ENCODE measurements at regions of chr3 and their contacts with region 1.

Region 1: DNA sequence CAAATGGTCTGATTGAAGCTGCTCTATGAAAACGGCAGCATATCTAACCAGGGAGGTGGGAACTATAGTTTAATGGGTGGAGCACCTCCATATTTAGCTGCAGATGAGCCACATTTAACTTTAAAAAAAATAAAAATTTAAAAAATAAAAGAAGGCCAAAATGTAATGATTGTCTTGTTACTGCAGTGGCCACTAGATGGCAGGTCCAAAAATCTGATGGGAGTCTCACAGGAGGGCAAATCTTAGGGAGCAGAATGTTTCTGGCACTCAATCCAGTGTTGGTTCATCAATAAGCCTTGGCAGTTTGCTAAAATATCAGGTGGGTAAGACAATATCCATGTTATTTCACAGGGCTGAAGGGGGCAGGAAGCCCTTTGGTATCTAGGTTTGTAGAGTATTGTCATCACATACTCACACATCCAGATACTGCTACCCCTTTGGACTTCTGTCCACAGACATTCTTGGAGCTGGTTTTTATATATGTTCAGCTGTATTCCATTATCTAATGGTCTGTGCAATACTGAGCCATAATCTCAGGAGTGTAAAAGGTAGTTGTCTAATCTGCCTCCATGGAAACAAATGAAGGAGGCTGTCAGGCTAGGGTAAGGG is 233.3 kb downstream of the TIGIT start:
- DNase-seq: no peak
- H3K4me3 ChIP-seq: no peak overlapping the region
- H3K27ac ChIP-seq: no peak overlapping the region
- H3K27me3 ChIP-seq: no peaks in the 10 kb centered on the region
- CTCF ChIP-seq: peak; percentile 69

Region 2: DNA sequence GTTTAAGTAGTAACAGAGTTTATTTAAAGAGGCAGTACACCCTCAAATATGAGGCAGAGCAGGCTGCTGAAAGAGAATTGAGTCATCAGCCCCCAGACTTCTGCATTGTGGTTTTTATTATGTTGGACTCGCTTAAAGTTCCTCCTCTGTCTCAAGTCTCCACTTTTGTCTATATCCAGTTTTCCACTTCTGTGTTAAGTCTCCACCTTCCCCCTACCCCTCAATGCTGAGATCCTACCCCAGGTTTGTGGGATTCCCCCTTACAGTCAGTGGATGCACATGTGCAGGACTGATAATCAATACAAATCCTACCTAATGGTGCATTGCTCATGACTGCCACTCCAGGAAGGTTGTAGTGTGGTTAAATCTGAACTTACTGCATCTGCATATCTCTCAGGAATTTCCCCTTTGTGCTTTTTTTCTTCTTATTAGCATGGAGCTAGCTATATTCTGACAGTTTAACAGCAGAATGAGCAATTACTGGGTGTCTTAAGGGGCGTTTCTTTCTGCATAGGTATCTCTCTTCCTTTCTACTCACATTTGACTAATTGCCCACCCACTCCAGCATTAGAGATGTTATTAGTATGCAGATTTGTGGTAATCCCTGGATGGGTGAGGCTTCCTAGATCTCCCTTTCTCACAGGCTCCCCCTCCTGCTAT is 1668.6 kb before region 1 on chr3:
- CTCF ChIA-PET with region 1: no interaction called
- POLR2A ChIA-PET with region 1: no interaction called
- DNase-seq: no peak
- H3K4me3 ChIP-seq: no peak overlapping the region
- H3K27ac ChIP-seq: no peak overlapping the region
- H3K27me3 ChIP-seq: no peaks in the 10 kb centered on the region
- CTCF ChIP-seq: no peak

Region 3: DNA sequence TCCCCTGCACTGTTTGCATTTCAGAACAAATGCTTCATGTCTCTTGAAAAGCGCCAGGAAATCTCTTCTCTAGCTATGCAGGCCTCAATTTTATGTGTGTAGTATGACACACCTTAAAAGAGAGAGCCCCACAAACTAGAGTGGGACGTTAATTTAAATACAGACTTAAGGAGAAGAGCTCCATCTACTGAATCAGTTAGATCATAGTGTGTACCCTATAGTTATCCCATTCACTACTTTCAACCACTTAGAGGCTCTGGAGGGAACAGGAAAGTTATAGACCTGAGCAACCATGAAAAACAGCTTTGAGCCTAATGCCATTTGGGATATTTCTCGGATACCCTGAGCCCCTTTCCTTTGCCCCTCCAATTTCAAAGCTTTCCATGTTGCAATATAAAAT is 79.6 kb before region 1 on chr3:
- CTCF ChIA-PET with region 1: interaction called, 19 read pairs
- POLR2A ChIA-PET with region 1: no interaction called
- DNase-seq: no peak
- H3K4me3 ChIP-seq: no peak overlapping the region
- H3K27ac ChIP-seq: no peak overlapping the region
- H3K27me3 ChIP-seq: no peaks in the 10 kb centered on the region
- CTCF ChIP-seq: no peak

Region 4: GRCh38 chr3:114582929-114583328 is 55.8 kb after region 1 on chr3:
- CTCF ChIA-PET with region 1: interaction called, 5 read pairs
- POLR2A ChIA-PET with region 1: interaction called, 10 read pairs
- DNase-seq: no peak
- H3K4me3 ChIP-seq: no peak overlapping the region
- H3K27ac ChIP-seq: no peak overlapping the region
- H3K27me3 ChIP-seq: no peaks in the 10 kb centered on the region
- CTCF ChIP-seq: no peak

Measured in AG04450 (cell line).